ENCODE measurements at regions of chr17 and their contacts with region 1.

Region 1: DNA sequence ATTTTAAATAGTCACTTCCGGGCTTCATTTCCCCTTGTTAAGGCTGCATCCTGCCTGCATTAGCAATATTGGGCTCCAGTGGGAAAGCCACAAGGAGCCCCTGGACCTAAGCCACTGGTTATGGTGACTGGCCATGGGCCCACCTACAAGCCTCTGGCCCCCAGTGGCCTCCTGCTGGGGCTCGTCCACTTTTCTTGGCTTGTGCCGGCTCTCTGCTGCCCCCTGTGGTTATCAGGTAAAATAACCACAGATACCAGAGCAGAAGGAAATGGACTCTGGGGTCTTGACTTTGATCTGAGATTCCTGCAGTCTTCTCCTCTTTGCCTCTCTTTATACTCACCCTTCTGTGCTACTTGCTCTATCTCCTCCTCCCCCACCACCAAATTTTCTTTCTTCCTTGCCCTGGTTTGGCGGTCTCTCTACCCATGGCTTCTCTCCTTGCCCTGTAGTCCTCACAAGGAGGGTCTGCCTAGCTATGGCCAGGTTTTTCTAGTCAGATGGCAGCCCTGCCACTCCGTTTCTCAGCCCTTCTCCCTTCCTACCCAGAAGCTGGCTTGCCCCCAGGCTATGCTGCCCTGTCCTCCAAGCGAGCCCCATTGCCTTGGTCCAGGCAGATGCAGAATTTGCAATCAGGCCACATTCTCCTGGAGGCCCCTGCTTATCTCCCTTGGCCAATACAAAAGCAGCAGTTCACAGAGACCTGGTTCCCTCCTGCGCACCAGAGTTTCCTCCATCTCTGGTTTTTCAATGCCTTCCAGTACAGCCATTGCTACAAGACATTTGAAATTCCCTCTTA is 82.9 kb upstream of the RCVRN start:
- DNase-seq: peak; percentile 71
- CTCF ChIP-seq: peak; percentile 66

Region 2: DNA sequence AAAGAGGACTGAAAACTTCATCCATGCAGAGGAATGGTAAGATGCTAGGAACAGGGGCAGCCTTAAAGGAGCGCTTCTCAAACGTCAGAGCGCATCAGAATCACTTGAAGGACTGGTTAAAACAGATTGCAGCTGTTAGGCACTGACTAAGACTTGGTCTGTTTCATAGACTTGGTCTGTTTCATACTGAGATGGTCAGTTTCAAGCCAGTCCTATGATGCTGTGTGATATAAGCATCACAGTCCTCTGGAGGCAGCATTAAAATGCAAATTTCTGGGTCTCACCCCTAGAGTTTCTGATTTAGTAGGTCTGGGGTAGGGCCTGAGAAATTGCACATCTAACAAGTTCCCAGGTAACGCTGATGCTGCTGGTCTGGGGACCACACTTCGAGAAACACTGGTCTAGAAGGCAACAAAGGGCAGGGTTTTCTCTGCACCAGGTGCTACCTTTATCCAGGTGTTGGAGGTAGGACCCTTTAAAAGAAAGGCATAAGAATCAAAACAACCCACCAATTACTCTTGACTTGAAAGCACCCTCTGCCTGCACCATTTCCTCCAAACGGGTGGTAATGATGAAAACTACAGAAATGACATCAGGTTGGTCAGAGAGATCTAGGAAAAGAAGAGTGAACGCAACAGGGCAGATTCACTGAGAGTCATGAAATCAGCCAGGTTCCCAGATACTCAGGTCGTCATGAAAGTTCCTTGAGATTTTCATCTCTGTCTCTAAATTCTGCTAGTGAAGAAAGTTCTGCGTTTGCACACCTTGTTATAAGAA is 12.1 kb after region 1 on chr17:
- CTCF ChIA-PET with region 1: interaction called, 13 read pairs
- POLR2A ChIA-PET with region 1: no interaction called
- DNase-seq: peak; percentile 44
- CTCF ChIP-seq: no peak

Region 3: GRCh38 chr17:10033959-10034358 is 46.0 kb after region 1 on chr17:
- CTCF ChIA-PET with region 1: interaction called, 12 read pairs
- POLR2A ChIA-PET with region 1: no interaction called
- DNase-seq: no peak
- CTCF ChIP-seq: no peak

Region 4: DNA sequence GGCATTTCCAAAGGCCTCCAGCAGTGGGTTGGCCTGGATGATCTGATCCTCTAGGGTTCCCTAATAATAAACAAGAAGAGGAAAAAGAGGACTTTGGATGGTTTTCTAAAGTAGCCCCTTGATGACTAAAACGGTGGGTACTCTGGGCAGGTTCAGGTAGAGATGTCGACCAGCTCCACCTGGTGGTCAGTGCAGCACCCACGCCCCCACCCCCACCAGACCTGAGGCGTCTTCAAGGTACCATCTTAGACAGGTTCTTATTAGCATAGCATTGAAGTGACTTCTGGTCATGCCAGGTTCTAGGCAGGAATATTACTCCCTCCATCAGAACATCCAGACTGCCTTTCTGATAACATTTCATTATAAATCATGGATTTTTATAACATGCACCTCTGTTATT is 369.8 kb after region 1 on chr17:
- CTCF ChIA-PET with region 1: no interaction called
- POLR2A ChIA-PET with region 1: no interaction called
- DNase-seq: peak; percentile 50
- CTCF ChIP-seq: peak; percentile 50